ENCODE measurements at regions of chr11 and their contacts with region 1.

Region 1: GRCh38 chr11:33996498-33997454 is 54.8 kb upstream of the CAPRIN1 start:
- DNase-seq: peak; percentile 19 to 86
- H3K4me3 ChIP-seq: no peak overlapping the region
- H3K27ac ChIP-seq: no peak overlapping the region
- H3K4me1 ChIP-seq: peaks cover 0 to 2% (median 0%) of the 10 kb centered on the region in 4 experiments; a peak in 1 of 7 replicates
- H3K27me3 ChIP-seq: peaks cover 0 to 8% (median 6%) of the 10 kb centered on the region in 4 experiments; a peak in 4 of 7 replicates
- CTCF ChIP-seq: peak; percentile 58 to 86 (median 72)
- EP300 ChIP-seq: no peak
- POLR2A ChIP-seq: no peak
- RAD21 ChIP-seq: peak; percentile 75 to 80

Region 2: DNA sequence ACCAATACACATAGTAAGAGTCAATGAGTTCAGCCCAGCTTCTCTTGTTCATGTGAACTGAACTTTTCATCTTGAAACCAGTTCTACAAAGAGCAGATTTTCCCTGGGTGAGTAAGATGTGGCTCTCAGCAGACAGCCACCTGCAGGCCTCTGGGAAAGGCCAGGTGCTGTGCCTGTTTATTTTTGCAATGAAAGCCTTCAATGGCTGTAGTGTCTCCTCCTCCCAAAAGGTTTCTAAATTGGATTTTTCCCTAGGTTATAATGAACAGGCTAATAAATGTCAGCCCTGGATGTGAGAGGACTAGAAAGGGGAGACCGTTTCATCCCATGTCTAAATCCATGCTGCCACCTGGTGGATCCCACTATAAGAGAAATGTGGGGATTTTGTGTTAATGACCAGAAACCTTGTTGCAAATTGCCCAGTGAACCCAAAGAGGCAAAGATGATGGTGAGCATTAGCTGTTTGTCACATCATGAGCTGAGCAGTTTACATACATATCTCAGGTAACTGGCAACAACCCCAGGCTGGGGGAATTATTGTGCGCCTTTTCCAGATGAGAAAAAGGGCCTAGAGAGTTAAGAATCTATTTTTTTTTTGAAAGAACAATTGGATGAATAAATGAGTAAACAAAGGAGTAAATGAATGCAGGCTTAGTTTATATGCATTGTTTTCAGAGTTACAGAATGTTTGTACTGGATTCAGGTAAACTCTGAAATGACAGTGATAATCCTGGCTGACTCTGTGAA is 308.9 kb before region 1 on chr11:
- CTCF ChIA-PET with region 1: no interaction called
- POLR2A ChIA-PET with region 1: no interaction called
- DNase-seq: peak in 1 of 2 experiments; percentile 72
- H3K4me3 ChIP-seq: no peak overlapping the region
- H3K27ac ChIP-seq: no peak overlapping the region
- H3K4me1 ChIP-seq: peaks cover 2 to 20% (median 10%) of the 10 kb centered on the region in 4 experiments
- H3K27me3 ChIP-seq: no peaks in the 10 kb centered on the region
- CTCF ChIP-seq: peak in 2 of 3 experiments; percentile 80; a peak in 3 of 4 replicates
- EP300 ChIP-seq: no peak
- POLR2A ChIP-seq: no peak
- RAD21 ChIP-seq: peak; percentile 99

Region 3: DNA sequence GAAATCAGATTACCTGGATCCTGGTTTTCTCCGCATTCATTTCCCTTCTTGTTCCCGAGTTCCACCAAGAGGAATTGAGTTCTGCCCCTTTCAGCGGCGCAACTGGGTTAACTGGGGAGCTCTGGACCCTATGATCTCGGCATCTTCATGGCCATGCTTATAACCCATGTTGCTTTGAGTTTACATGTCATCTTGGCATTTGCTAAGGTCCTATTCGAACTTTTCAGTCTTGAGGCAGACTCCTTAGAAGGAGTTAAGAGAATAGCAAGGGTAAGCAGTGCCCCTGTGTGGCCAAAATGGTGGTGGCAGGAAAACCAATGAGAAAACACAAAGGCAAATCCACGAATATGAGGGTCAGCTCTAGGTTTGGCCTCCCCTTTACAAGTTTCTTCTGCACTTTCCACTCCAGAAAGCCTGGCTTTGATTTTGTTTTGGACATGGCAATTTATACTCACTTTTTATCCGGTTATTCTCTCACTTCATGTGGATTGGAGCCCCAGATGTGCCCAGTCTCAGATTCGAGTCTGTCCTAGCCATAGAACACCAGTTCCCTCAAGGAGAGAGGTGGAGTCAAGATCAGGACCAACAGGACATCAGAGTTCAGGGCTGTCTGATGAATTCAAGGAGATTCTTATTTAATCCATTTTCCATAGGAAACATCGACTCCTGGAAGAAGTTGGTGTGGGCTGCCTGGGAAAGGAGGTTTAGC is 167.2 kb before region 1 on chr11:
- CTCF ChIA-PET with region 1: interaction called, 12 read pairs
- POLR2A ChIA-PET with region 1: no interaction called
- DNase-seq: peak in 1 of 2 experiments; percentile 79
- H3K4me3 ChIP-seq: peak overlapping the region; percentile 39 to 70 (median 49)
- H3K27ac ChIP-seq: no peak overlapping the region
- H3K4me1 ChIP-seq: peaks cover 0 to 4% (median 2%) of the 10 kb centered on the region in 4 experiments; a peak in 1 of 7 replicates
- H3K27me3 ChIP-seq: peaks cover 4 to 23% (median 13%) of the 10 kb centered on the region in 4 experiments
- CTCF ChIP-seq: peak; percentile 33 to 86 (median 76)
- EP300 ChIP-seq: no peak
- POLR2A ChIP-seq: no peak
- RAD21 ChIP-seq: peak; percentile 90 to 92

Region 4: DNA sequence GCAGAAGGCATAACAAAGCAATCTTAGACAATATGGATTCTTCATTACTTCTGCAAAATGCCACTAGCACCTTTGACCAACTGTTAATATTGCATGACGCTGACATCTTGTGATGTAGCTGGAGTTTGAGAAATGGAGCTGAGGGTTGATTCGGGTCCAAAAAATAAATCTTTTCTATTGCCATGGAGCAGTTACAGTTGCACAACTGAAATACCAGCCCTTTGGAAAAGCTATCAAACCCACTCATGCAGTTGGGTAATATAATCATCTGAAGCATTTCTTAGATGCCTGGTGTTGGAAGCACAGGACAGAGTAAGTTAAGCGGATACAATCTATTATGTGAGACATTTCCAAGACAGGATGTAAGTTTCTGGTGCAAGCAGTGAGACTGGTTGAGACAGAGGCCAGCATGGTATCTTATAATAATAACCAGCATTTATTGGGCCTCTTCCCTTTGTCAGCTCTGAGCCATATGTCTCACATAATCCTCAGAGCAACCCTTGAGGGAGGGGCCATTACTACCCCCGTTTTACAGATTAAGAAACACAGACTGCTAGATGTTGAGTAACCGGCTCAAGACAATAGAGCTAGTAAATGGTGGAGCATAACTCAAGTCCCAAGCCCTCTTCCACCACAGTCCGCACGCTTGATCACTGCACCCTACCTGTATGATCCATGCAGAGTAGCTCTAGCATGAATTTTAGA is 20.1 kb before region 1 on chr11:
- CTCF ChIA-PET with region 1: interaction called, 51 read pairs
- POLR2A ChIA-PET with region 1: no interaction called
- DNase-seq: no peak
- H3K4me3 ChIP-seq: no peak overlapping the region
- H3K27ac ChIP-seq: no peak overlapping the region
- H3K4me1 ChIP-seq: no peaks in the 10 kb centered on the region
- H3K27me3 ChIP-seq: no peaks in the 10 kb centered on the region
- CTCF ChIP-seq: no peak
- EP300 ChIP-seq: no peak
- POLR2A ChIP-seq: no peak
- RAD21 ChIP-seq: no peak

Region 5: DNA sequence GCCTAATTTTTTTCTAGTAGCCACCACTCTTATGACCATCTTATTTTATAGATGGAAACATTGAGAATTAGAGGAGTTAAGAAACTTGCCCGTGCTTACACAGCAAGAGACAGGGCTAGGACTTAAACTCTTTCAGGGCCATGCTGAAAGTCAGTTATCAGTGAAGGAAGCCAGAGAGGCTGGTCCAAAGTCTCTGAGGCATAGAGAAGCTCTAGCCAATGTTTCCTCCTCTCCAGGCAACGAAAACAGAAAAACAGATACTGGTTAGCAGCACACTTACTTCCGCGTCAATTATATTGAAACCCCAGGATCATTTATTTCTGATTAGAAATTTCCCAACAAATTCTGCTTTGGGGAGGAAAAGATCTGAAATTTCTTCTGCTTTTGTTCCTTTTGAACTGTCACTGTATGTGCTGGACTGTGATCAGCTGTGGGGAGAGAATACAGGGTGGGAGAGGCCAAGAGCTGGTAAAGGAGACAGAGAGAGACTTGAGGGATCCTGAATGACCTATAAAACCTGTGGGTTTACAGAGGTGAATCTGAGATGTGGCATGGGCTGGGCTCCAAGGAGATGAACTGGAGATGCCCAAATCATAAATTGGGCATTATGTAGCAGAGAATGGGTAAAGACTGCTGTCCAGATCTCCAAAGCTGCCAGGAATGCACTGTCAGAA is 17.3 kb after region 1 on chr11:
- CTCF ChIA-PET with region 1: interaction called, 38 read pairs
- POLR2A ChIA-PET with region 1: no interaction called
- DNase-seq: no peak
- H3K4me3 ChIP-seq: no peak overlapping the region
- H3K27ac ChIP-seq: no peak overlapping the region
- H3K4me1 ChIP-seq: no peaks in the 10 kb centered on the region
- H3K27me3 ChIP-seq: peaks cover 0 to 1% (median 0%) of the 10 kb centered on the region in 4 experiments; a peak in 1 of 7 replicates
- CTCF ChIP-seq: no peak
- EP300 ChIP-seq: no peak
- POLR2A ChIP-seq: no peak
- RAD21 ChIP-seq: no peak

Region 6: DNA sequence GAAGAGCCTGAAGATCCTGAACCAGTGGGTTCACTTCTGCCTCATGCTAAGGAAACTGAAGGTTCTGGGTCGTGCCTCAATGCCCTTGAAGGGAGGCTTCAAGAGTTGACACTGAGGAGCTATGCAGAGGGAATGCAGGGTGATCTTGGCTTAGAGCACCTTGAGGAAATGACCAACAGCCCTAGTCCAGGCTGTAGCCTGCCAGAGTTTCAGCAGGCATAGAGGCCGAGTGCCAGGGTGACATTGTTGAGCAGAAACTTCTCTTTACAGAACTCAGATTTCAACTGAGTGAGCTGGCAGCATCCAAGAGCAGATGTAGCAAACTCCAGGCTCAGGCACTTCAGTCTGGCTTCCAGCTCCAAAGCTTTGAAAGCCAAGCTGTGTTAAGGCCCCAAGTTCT is 31.6 kb after region 1 on chr11:
- CTCF ChIA-PET with region 1: interaction called, 16 read pairs
- POLR2A ChIA-PET with region 1: no interaction called
- DNase-seq: no peak
- H3K4me3 ChIP-seq: no peak overlapping the region
- H3K27ac ChIP-seq: no peak overlapping the region
- H3K4me1 ChIP-seq: peaks cover 0 to 6% (median 1%) of the 10 kb centered on the region in 4 experiments; a peak in 2 of 7 replicates
- H3K27me3 ChIP-seq: no peaks in the 10 kb centered on the region
- CTCF ChIP-seq: no peak
- EP300 ChIP-seq: no peak
- POLR2A ChIP-seq: no peak
- RAD21 ChIP-seq: no peak

Region 7: GRCh38 chr11:34068111-34068510 is 71.3 kb after region 1 on chr11:
- CTCF ChIA-PET with region 1: interaction called, 11 read pairs
- POLR2A ChIA-PET with region 1: no interaction called
- DNase-seq: no peak
- H3K4me3 ChIP-seq: no peak overlapping the region
- H3K27ac ChIP-seq: no peak overlapping the region
- H3K4me1 ChIP-seq: no peaks in the 10 kb centered on the region
- H3K27me3 ChIP-seq: no peaks in the 10 kb centered on the region
- CTCF ChIP-seq: no peak
- EP300 ChIP-seq: no peak
- POLR2A ChIP-seq: no peak
- RAD21 ChIP-seq: no peak